Breast epithelium (tissue), 4 donors: ENCODE measurements at regions of chr3 and their contacts with region 1.

Region 1: DNA sequence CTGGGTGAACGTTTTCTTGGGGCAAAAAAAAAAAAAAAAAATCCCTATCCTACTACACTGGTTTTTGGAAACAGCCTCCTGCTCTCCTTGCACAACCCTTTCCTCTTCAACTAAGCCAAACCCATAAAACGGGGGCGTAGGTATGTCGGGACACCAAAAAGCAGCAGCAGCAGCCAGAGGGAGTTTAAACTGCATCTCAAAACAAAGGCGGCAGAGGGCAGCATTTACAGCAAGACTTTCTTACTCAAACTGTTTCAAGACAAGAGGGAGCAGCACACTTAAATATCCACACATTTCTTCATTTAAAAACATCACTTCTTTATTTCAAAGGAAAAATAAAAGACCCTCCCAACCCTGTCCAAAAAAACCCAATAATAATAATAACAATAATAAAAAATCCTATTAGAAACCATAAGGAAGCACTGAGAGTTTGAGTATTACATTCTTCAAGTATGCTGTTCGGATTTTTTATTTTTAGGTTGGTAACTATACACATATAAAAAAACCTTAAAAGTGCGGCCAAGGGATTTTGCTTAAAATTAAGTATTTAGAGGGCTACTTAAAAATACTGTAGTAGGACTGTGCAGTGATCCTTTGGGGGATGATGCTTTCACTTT is 43.9 kb upstream of the PLXND1 start:
- DNase-seq: peak; percentile 63 to 89
- H3K4me3 ChIP-seq: no peak overlapping the region
- H3K27ac ChIP-seq: no peak overlapping the region
- H3K4me1 ChIP-seq: no peaks in the 10 kb centered on the region
- H3K27me3 ChIP-seq: no peaks in the 10 kb centered on the region
- CTCF ChIP-seq: peak in 2 of 3 donors; percentile 73 to 83
- POLR2A ChIP-seq: no peak

Region 2: GRCh38 chr3:129627429-129628168 is 22.8 kb before region 1 on chr3:
- intact Hi-C with region 1: no loop called
- DNase-seq: peak in 1 of 2 donors; percentile 62
- H3K4me3 ChIP-seq: peak overlapping the region; percentile 44 to 76 (median 66)
- H3K27ac ChIP-seq: peak overlapping the region; percentile 92 to 99
- H3K4me1 ChIP-seq: peaks cover 0 to 13% of the 10 kb centered on the region in 2 donors
- H3K27me3 ChIP-seq: no peaks in the 10 kb centered on the region
- CTCF ChIP-seq: peak; percentile 71 to 88 (median 85)
- POLR2A ChIP-seq: no peak

Region 3: DNA sequence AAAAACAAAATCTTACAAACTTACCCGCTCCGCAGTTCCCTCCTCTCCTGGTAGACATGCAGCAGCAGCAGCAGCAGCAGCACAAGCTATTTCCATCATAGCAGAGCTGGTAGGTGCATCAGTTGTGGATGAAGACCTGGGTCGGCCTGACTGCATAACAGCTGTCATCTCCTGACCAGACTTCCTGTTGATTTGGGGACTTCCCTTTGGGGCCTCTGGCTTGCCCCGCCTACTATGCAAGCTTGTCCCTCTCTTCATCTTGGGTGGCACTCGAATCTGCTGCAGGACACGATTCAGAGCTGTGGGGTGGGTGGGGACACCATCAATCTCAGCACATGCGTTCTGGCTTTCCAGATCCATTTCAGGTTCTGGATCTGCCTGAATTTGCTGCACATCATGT is 177.4 kb after region 1 on chr3:
- intact Hi-C with region 1: loop called (anchors 2 kb)
- DNase-seq: no peak
- H3K4me3 ChIP-seq: no peak overlapping the region
- H3K27ac ChIP-seq: no peak overlapping the region
- H3K4me1 ChIP-seq: no peaks in the 10 kb centered on the region
- H3K27me3 ChIP-seq: no peaks in the 10 kb centered on the region
- CTCF ChIP-seq: no peak
- POLR2A ChIP-seq: no peak

Region 4: GRCh38 chr3:129934234-129935123 is 284.1 kb after region 1 on chr3:
- intact Hi-C with region 1: no loop called
- DNase-seq: no peak
- H3K4me3 ChIP-seq: peak overlapping the region in 2 of 3 donors; percentile 32 to 42
- H3K27ac ChIP-seq: no peak overlapping the region
- H3K4me1 ChIP-seq: no peaks in the 10 kb centered on the region
- H3K27me3 ChIP-seq: no peaks in the 10 kb centered on the region
- CTCF ChIP-seq: peak; percentile 81 to 91 (median 91)
- POLR2A ChIP-seq: no peak